Activated CD8-positive, alpha-beta T cell treated with anti-CD3 and anti-CD28 coated beads, Interleukin-2, amount 10 ng/mL, durations not matched to agents 7 days and 5 days (primary cell): ENCODE measurements at regions of chr20 and their contacts with region 1.

Region 1: GRCh38 chr20:38434743-38435554 is at the start of gene SNHG17:
- DNase-seq: peak; percentile 92
- ATAC-seq: peak; percentile 83
- H3K4me3 Mint-ChIP-seq: peak within 1 kb of the TSS; percentile 95
- H3K27ac Mint-ChIP-seq: peak within 1 kb of the TSS; percentile 96
- H3K4me1 Mint-ChIP-seq: peaks cover 41% of the 10 kb centered on the region
- H3K27me3 Mint-ChIP-seq: peaks cover 4% of the 10 kb centered on the region
- total RNA-seq, gene SNHG17: 69.6 to 77.8 TPM

Region 2: DNA sequence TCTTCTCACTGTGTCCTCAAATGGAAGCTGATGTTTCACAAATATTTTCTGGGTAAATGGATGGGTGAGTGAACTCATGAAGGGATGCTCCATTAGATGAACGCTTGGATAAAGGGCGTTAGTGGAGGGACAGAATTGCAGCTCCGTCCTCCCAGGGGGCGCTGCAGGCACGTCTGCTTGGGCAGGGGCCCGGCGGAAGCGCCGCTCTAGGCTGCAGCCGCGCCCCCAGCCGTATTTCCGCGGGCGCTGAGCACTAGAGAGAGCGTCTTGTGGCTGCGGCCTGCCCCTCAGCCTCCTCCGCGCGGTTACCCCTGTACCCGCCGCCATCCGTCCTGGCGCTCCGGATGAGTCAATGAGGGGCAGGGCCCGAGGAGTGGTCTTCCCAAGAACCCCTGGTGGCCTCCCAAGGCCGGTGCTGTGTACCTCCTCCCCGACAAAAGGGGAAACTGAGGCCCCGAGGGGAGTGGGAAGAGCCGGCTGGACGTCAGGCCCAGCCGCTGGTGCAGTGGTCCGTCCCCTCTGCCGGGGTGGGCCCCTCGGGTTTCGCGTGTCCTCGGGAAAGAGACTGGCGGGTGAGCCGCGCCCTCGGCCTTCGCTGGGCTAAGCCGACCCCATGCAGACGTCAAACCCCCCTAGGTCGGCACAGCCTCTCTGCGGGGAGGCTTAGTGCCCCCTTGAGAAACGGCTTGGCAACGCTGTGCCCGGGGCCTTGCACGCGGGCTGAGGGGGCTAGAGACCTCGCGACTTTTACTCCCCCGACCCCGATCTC is 11.7 kb after region 1 on chr20:
- CTCF ChIA-PET with region 1: interaction called, 121 read pairs
- POLR2A ChIA-PET with region 1: interaction called, 143 read pairs
- DNase-seq: peak; percentile 94
- ATAC-seq: peak; percentile 97
- H3K4me3 Mint-ChIP-seq: peak overlapping the region; percentile 78
- H3K27ac Mint-ChIP-seq: peak overlapping the region; percentile 88
- H3K4me1 Mint-ChIP-seq: peaks cover 26% of the 10 kb centered on the region
- H3K27me3 Mint-ChIP-seq: peaks cover 6% of the 10 kb centered on the region

Region 3: DNA sequence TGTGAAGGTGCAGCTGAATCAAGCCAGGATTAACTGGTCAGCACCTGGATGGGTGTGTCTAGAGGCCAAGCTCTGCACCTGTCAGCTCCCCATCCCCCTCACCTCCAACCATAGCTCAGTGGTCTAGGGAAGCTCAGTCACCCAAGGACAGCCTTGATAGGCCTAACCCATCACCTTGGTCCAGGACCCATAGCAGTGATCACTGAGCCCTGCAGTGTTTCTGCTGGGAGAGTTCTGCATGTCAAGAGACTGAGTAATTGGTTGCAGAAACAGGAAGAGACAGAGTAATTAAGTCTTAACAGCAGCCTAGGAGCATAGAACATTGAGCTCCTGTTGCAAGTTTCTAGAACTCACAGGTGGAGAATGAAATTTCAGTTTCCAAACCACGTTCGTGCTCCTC is 19.0 kb after region 1 on chr20:
- CTCF ChIA-PET with region 1: interaction called, 121 read pairs
- POLR2A ChIA-PET with region 1: interaction called, 143 read pairs
- DNase-seq: no peak
- ATAC-seq: no peak
- H3K4me3 Mint-ChIP-seq: no peak overlapping the region
- H3K27ac Mint-ChIP-seq: no peak overlapping the region
- H3K4me1 Mint-ChIP-seq: peaks cover 2% of the 10 kb centered on the region
- H3K27me3 Mint-ChIP-seq: peaks cover 6% of the 10 kb centered on the region